HCT116 (cell line): ENCODE measurements at regions of chr11 and their contacts with region 1.

Region 1: DNA sequence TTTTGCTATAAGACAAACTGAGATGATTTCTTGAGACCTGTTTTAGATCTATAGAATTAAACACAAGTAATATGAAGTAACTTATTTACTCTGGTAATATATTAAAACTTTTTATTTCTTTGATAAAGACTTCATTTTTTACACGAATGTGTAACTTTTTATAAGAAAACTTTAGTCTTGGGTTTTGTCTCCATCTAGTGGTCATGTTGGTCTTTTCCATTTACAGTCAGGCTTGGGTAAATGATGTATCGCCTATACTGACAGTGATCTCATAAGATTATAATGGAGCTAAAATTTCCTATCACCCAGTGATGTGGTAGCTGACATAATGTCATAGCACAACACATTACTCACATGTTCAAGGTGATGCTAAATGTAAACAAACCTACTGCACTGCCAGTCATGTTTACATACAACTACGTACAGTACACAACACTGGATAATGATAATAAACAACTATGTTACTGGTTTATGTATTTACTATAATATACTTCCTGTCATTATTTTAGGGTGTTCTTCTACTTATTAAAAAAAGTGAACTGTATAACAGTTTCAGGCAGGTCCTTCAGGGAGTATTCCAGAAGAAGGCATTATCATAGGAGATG is 7.5 kb upstream of the C11orf97 start:
- DNase-seq: peak; percentile 51
- ATAC-seq: peak; percentile 79
- H3K4me3 ChIP-seq: no peak overlapping the region
- H3K27ac ChIP-seq: no peak overlapping the region
- H3K4me1 ChIP-seq: no peaks in the 10 kb centered on the region
- H3K27me3 ChIP-seq: no peaks in the 10 kb centered on the region
- CTCF ChIP-seq: peak; percentile 55 to 72 (median 69)
- POLR2A ChIP-seq: no peak
- RAD21 ChIP-seq: peak; percentile 86

Region 2: DNA sequence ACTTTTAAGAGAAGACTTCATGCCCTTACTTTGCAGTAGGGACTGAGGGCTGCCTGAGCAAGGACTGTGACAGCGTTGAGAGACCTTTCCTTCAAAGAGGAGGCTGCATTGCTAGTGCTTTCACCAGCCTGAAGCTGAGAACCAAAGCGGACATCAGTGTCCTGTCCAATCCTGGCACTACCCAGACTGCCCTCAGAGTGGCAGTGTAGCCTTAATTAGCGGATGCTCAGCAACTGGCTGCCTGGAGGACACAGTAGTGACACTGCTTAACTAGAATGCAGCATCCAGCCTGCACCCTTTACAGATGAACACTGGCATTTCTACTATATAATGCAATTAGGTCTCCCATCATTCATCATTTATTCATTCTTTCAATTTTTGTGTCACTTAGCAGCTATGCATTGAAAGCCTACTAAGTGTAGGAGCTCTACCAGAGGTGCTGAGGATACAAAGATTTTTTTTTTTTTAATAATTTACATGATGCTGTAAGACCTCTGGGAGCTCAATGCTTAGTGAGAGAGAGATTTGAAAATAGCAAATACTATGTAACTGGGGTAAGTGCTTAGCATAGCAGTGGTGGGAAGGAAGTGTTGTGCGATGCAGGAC is 1270.1 kb before region 1 on chr11:
- CTCF ChIA-PET with region 1: interaction called, 3 read pairs
- POLR2A ChIA-PET with region 1: no interaction called
- RAD21 ChIA-PET with region 1: no interaction called
- intact Hi-C with region 1: loop called (anchors 1 kb)
- DNase-seq: peak; percentile 61
- ATAC-seq: peak; percentile 98
- H3K4me3 ChIP-seq: no peak overlapping the region
- H3K27ac ChIP-seq: no peak overlapping the region
- H3K4me1 ChIP-seq: peaks cover 0 to 5% of the 10 kb centered on the region in 2 experiments; a peak in 1 of 4 replicates
- H3K27me3 ChIP-seq: peaks cover 21% of the 10 kb centered on the region; the same call in 1 of the 2 replicates
- CTCF ChIP-seq: peak; percentile 75 to 91 (median 89)
- POLR2A ChIP-seq: no peak
- RAD21 ChIP-seq: peak; percentile 92

Region 3: DNA sequence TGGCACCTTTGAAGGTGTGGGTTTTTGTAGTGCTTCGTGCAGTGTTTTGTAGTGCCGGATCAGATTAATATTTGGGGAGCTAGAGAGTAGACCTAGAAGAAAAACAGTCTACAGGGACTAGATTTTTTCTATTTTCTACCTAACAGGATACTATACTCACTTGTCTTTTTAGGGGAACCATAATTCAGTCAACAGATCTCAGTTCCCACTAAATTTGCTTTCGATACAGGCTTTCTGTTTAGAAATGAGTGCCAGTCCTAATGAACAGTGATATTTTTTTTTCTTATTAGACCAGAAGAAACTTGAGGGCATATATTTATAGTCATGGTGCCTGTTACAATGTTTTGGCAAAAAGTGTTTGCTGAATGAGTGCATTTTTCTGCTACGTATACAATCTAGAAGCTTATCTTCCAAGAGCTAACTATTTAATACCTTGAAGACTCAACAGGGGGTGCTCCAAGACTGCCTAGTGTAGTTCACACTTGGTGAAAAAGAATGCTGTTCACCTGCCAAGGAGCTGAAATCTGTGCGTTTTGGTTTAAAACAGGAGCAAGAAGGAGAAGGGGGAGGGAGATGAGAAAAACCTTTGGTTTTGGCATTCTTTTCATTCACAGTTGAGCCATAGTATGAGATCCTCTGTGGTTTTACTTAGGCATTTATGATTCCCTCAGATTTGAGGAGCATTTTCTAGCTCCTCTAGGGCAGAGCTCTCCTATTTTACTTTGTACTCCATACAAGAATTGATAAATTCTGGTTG is 609.5 kb before region 1 on chr11:
- CTCF ChIA-PET with region 1: interaction called, 54 read pairs
- POLR2A ChIA-PET with region 1: no interaction called
- RAD21 ChIA-PET with region 1: interaction called, 8 to 13 read pairs
- intact Hi-C with region 1: loop called (anchors 1 kb)
- DNase-seq: peak; percentile 59
- ATAC-seq: peak; percentile 98
- H3K4me3 ChIP-seq: no peak overlapping the region
- H3K27ac ChIP-seq: no peak overlapping the region
- H3K4me1 ChIP-seq: no peaks in the 10 kb centered on the region
- H3K27me3 ChIP-seq: 0 out of 2 replicates have a peak, but pooled peaks cover 6% of the 10 kb centered on the region
- CTCF ChIP-seq: peak; percentile 59 to 79 (median 65); a peak in 5 of 6 replicates
- POLR2A ChIP-seq: no peak
- RAD21 ChIP-seq: peak; percentile 90

Region 4: DNA sequence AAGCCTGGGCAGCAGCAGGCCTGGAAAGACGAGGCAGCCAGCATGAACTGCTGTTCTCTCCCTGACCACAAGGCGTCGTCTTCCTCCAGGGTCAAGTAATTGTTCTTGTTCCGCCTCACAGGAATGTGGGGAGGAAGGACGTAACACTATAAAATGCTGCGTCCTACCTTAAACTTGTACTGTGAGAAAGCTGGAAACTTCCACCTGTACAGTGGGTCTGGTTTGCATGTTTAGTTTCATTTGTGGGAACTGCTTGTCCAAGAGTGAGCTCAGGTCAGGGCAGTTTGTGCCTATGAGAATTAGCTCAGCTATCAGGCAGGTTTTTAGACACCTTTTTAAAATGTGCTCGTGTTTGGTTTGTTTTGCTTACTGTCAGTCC is 320.9 kb before region 1 on chr11:
- CTCF ChIA-PET with region 1: interaction called, 21 read pairs
- POLR2A ChIA-PET with region 1: no interaction called
- RAD21 ChIA-PET with region 1: no interaction called
- intact Hi-C with region 1: loop called (anchors 1 kb)
- DNase-seq: peak; percentile 49
- ATAC-seq: peak; percentile 94
- H3K4me3 ChIP-seq: no peak overlapping the region
- H3K27ac ChIP-seq: no peak overlapping the region
- H3K4me1 ChIP-seq: peaks cover 0 to 5% of the 10 kb centered on the region in 2 experiments; a peak in 1 of 4 replicates
- H3K27me3 ChIP-seq: no peaks in the 10 kb centered on the region
- CTCF ChIP-seq: peak; percentile 65 to 94 (median 90)
- POLR2A ChIP-seq: no peak
- RAD21 ChIP-seq: peak; percentile 82